Activated CD4-positive, alpha-beta memory T cell treated with anti-CD3 and anti-CD28 coated beads for 36 hours (primary cell): ENCODE measurements at regions of chr5 and their contacts with region 1.

Region 1: DNA sequence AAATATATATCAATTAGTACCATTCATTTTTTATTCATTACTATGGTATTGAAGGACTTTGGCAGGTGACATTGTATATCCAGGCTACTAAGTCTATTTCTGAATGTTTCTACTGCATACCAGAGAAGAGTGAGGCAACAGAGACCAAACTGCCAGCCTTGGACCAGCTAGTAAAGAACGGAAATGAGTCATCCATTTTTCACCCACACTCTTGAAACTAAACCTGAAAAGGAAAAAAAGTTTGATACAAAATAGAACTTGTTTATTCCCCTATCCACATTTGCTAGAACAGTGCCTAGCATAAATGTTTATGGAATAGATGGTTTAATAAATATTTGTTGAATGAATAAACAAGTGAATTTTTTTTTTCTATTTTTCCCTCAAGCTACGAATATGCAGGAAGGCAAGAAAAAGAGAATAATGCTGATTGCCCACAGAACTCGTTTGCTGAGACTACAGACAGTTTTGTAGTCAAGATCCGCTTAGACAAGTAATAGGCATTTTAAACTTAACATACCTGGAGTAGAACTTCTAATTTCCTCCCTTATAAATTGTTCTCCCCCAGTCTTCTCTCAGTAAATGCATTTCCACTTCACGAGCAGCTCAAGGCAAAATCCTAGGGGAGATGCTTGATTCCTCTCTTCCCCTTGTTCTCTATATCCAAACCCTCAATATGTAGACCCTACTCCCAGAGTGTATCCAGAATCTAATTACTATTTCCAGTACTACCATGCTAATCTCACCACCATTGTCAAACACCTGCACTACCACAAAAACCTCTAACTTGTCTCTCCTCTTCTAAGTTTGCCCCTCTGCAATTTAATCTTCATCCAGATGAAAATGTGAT is 146.2 kb upstream of the RASA1 start:
- DNase-seq: peak; percentile 56
- H3K4me3 Mint-ChIP-seq: peak overlapping the region; percentile 11
- H3K27ac Mint-ChIP-seq: peak overlapping the region; percentile 79
- H3K4me1 Mint-ChIP-seq: peaks cover 55% of the 10 kb centered on the region
- H3K27me3 Mint-ChIP-seq: no peaks in the 10 kb centered on the region

Region 2: DNA sequence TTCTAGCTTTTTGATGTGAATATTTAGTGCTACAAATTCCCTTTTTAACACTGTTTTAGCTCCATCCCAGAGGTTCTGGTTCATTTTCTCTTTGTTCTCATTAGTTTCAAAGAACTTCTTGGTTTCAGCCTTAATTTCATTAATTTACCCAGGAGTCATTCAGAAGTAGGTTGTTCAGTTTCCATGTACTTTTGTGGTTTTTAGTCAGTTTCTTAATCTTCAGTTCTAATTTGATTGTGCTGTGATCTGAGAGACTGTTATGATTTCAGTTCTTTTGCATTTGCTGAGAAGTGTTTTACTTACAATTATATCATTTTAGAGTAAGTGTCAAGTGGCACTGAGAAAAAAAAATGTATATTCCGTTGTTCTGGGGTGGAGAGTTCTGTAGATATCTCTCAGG is 94.0 kb before region 1 on chr5:
- CTCF ChIA-PET with region 1: interaction called, 3 read pairs
- POLR2A ChIA-PET with region 1: no interaction called
- intact Hi-C with region 1: loop called (anchors 2 kb)
- DNase-seq: no peak
- H3K4me3 Mint-ChIP-seq: no peak overlapping the region
- H3K27ac Mint-ChIP-seq: no peak overlapping the region
- H3K4me1 Mint-ChIP-seq: peaks cover 27% of the 10 kb centered on the region
- H3K27me3 Mint-ChIP-seq: no peaks in the 10 kb centered on the region

Region 3: GRCh38 chr5:87103596-87104287 is 17.8 kb before region 1 on chr5:
- CTCF ChIA-PET with region 1: interaction called, 3 read pairs
- POLR2A ChIA-PET with region 1: no interaction called
- intact Hi-C with region 1: loop called (anchors 1 kb)
- DNase-seq: no peak
- H3K4me3 Mint-ChIP-seq: no peak overlapping the region
- H3K27ac Mint-ChIP-seq: no peak overlapping the region
- H3K4me1 Mint-ChIP-seq: peaks cover 18% of the 10 kb centered on the region
- H3K27me3 Mint-ChIP-seq: no peaks in the 10 kb centered on the region

Region 4: GRCh38 chr5:87137283-87137682 is 15.8 kb after region 1 on chr5:
- CTCF ChIA-PET with region 1: no interaction called
- POLR2A ChIA-PET with region 1: no interaction called
- intact Hi-C with region 1: no loop called
- DNase-seq: no peak
- H3K4me3 Mint-ChIP-seq: no peak overlapping the region
- H3K27ac Mint-ChIP-seq: no peak overlapping the region
- H3K4me1 Mint-ChIP-seq: no peaks in the 10 kb centered on the region
- H3K27me3 Mint-ChIP-seq: no peaks in the 10 kb centered on the region

Region 5: GRCh38 chr5:87151547-87151946 is 30.0 kb after region 1 on chr5:
- CTCF ChIA-PET with region 1: no interaction called
- POLR2A ChIA-PET with region 1: no interaction called
- intact Hi-C with region 1: no loop called
- DNase-seq: no peak
- H3K4me3 Mint-ChIP-seq: no peak overlapping the region
- H3K27ac Mint-ChIP-seq: no peak overlapping the region
- H3K4me1 Mint-ChIP-seq: peaks cover 5% of the 10 kb centered on the region
- H3K27me3 Mint-ChIP-seq: no peaks in the 10 kb centered on the region

Region 6: DNA sequence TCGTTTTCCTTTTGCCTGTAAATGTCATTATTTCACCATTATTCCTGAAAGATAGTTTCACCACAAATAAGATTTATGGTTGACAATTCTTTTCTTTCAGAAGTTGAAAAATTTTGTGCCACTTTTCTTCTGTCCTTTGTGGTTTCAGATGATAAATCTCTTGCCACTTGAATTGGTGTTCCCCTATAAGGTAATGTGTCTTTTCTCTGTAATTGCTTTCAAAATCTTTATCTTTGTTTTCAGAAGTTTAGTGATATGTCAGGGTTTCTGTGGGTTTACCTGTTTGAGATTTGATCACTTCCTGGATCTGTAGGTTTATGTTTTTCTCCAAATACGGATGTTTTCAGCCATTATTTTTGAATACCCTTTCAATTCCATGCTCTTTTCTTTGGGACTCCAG is 160.7 kb after region 1 on chr5:
- CTCF ChIA-PET with region 1: no interaction called
- POLR2A ChIA-PET with region 1: no interaction called
- intact Hi-C with region 1: loop called (anchors 1 kb)
- DNase-seq: no peak
- H3K4me3 Mint-ChIP-seq: peak overlapping the region; percentile 70
- H3K27ac Mint-ChIP-seq: peak overlapping the region; percentile 89
- H3K4me1 Mint-ChIP-seq: peaks cover 48% of the 10 kb centered on the region
- H3K27me3 Mint-ChIP-seq: no peaks in the 10 kb centered on the region

Region 7: GRCh38 chr5:87340716-87341115 is 219.2 kb after region 1 on chr5:
- CTCF ChIA-PET with region 1: no interaction called
- POLR2A ChIA-PET with region 1: no interaction called
- intact Hi-C with region 1: loop called (anchors 1 kb)
- DNase-seq: no peak
- H3K4me3 Mint-ChIP-seq: peak overlapping the region; percentile 47
- H3K27ac Mint-ChIP-seq: peak overlapping the region; percentile 73
- H3K4me1 Mint-ChIP-seq: peaks cover 17% of the 10 kb centered on the region
- H3K27me3 Mint-ChIP-seq: no peaks in the 10 kb centered on the region